OCI-LY7 (cell line): ENCODE measurements at regions of chr6 and their contacts with region 1.

Region 1: GRCh38 chr6:33744001-33744848 is 2.5 kb downstream of the IP6K3 start:
- DNase-seq: peak; percentile 79
- H3K4me3 ChIP-seq: no peak overlapping the region
- H3K27ac ChIP-seq: no peak overlapping the region
- H3K4me1 ChIP-seq: no peaks in the 10 kb centered on the region
- CTCF ChIP-seq: peak; percentile 94

Region 2: DNA sequence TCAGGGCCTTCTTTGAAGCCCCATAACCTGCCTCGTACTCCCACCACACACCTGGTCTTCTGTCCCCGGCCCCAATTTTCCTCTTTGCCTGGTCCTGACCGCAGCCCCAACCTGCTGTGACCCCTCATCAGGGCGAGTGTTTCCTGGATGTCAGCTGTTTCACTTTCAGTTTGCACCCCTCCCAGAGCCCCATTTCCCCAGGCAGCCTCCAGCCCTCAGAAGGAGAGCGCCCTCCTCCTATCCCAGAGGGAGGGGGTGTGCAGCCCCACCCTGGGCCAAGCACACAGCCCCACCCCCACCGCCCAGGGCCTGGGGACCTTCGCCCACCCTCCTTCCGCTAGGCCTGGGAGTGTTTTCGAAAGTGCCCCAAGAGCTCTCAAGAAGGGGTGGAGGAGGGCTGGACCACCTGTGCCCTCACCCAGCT is 165.6 kb before region 1 on chr6:
- CTCF ChIA-PET with region 1: interaction called, 10 read pairs
- POLR2A ChIA-PET with region 1: no interaction called
- intact Hi-C with region 1: no loop called
- DNase-seq: peak; percentile 43
- H3K4me3 ChIP-seq: peak overlapping the region; percentile 94
- H3K27ac ChIP-seq: peak overlapping the region; percentile 58
- H3K4me1 ChIP-seq: peaks cover 23% of the 10 kb centered on the region
- CTCF ChIP-seq: no peak; the same call in 1 of the 2 replicates

Region 3: GRCh38 chr6:33665957-33666356 is 78.3 kb before region 1 on chr6:
- CTCF ChIA-PET with region 1: no interaction called
- POLR2A ChIA-PET with region 1: no interaction called
- intact Hi-C with region 1: no loop called
- DNase-seq: no peak
- H3K4me3 ChIP-seq: no peak overlapping the region
- H3K27ac ChIP-seq: no peak overlapping the region
- H3K4me1 ChIP-seq: peaks cover 6% of the 10 kb centered on the region
- CTCF ChIP-seq: peak; percentile 32; the same call in 1 of the 2 replicates

Region 4: DNA sequence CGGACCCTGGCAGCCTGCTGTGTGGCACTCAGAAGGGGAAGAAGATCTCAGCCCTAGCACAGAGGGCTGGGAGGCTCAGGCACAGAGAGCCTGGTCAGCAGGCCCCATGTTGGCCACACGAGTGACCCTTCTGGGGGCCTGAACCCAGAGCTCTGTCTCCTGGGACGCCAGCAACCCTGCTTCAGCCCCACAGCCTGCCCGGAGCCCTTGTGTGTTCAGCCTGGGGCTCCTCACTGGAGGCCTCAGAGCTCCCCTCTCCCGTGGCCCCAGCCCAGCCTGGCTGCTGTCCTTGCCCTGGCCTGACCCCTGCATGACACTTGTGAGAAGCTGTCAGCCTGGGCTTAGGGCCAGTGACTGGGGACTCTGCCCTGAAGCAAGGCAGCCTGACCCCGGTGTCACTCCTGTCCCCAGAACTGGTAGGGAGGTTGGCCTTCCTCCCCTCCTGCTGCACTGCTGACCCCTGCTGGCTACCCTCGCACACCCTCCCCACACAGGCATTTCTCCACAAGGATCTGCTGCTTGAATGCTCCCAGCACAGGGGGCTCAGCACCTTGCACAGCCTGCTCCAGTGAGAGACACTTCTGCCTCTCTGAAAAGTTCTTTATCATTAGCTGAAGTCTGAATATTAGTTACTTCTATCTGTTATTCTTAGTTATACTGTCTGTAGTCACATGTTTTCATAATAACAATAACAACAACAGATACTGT is 17.9 kb after region 1 on chr6:
- CTCF ChIA-PET with region 1: interaction called, 3 read pairs
- POLR2A ChIA-PET with region 1: no interaction called
- intact Hi-C with region 1: loop called (anchors 1 kb)
- DNase-seq: peak; percentile 52
- H3K4me3 ChIP-seq: no peak overlapping the region
- H3K27ac ChIP-seq: no peak overlapping the region
- H3K4me1 ChIP-seq: no peaks in the 10 kb centered on the region
- CTCF ChIP-seq: peak; percentile 75

Region 5: GRCh38 chr6:33812669-33813068 is 68.4 kb after region 1 on chr6:
- CTCF ChIA-PET with region 1: no interaction called
- POLR2A ChIA-PET with region 1: no interaction called
- intact Hi-C with region 1: loop called (anchors 2 kb)
- DNase-seq: peak; percentile 39
- H3K4me3 ChIP-seq: no peak overlapping the region
- H3K27ac ChIP-seq: no peak overlapping the region
- H3K4me1 ChIP-seq: no peaks in the 10 kb centered on the region
- CTCF ChIP-seq: no peak